GM12878 (cell line): ENCODE measurements at regions of chr6 and their contacts with region 1.

Region 1: GRCh38 chr6:63598049-63599036 is 26.1 kb downstream of the LOC128125822 start:
- DNase-seq: peak; percentile 57
- ATAC-seq: peak; percentile 100
- H3K4me3 ChIP-seq: peak overlapping the region; percentile 74
- H3K27ac ChIP-seq: peak overlapping the region; percentile 56
- H3K4me1 ChIP-seq: peaks cover 6% of the 10 kb centered on the region
- H3K27me3 ChIP-seq: no peaks in the 10 kb centered on the region
- CTCF ChIP-seq: peak; percentile 88 to 94 (median 93); a peak in 5 of 6 replicates
- EP300 ChIP-seq: no peak
- POLR2A ChIP-seq: 0 out of 2 replicates have a peak, but pooled peaks have one; percentile 41
- RAD21 ChIP-seq: peak; percentile 87

Region 2: DNA sequence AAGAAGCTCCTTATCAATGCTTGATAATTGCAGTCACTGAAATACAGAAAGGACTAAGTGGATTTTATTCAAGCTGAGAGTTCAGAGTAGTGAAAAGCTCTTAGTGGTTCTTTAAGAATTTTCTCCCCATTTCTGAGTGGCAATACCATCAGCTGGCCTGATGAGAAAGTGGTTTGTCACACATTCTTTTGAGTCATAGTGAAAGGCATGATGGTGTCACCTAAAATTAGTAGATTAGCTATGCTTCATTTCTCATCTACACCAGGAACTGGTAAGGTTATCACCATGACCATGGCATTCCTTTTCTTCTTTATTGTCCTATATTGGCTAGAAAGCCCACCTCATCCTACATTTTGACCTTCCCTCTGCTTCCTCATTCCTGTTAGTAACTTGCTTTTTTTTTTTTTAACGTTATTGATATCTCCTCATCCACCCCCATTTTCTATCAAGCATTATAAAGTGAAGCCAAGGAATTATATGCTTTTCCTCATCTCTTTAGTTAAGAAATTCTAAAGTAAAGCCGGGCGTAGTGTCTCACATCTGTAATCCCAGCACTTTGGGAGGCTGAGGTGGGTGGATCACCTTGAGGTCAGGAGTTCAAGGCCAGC is 93.5 kb before region 1 on chr6:
- CTCF ChIA-PET with region 1: interaction called, 11 read pairs
- POLR2A ChIA-PET with region 1: interaction called, 3 read pairs
- RAD21 ChIA-PET with region 1: interaction called, 5 read pairs
- SMC1A ChIA-PET with region 1: interaction called, 5 read pairs
- in situ Hi-C with region 1: no loop called
- intact Hi-C with region 1: no loop called
- DNase-seq: peak; percentile 89
- ATAC-seq: peak; percentile 93
- H3K4me3 ChIP-seq: 0 out of 2 replicates have a peak overlapping the region, but pooled peaks have one; percentile 18
- H3K27ac ChIP-seq: peak overlapping the region; percentile 66
- H3K4me1 ChIP-seq: peaks cover 30% of the 10 kb centered on the region
- H3K27me3 ChIP-seq: no peaks in the 10 kb centered on the region
- CTCF ChIP-seq: no peak
- EP300 ChIP-seq: peak; percentile 92 to 98
- POLR2A ChIP-seq: no peak
- RAD21 ChIP-seq: peak; percentile 29; the same call in 1 of the 2 replicates

Region 3: DNA sequence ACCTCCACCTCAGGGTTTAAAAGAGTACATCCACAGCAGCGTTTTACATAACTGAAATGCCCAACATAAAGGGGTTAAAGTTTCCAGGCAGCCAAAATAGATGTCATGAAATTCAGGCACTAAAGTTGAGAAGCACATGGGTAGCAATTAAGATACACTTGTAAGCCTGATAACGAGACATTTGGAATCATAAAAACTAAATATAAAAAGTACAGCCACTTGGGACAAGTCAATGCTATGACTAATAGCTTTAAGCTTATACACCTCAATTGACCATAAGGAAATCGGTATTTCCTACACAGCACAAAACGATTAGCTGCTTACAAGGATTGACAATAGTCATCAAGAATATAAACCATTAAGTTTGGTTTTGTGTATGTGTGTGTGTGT is 14.2 kb before region 1 on chr6:
- CTCF ChIA-PET with region 1: interaction called, 15 read pairs
- POLR2A ChIA-PET with region 1: no interaction called
- RAD21 ChIA-PET with region 1: interaction called, 3 read pairs
- SMC1A ChIA-PET with region 1: interaction called, 14 read pairs
- in situ Hi-C with region 1: no loop called
- intact Hi-C with region 1: no loop called
- DNase-seq: no peak
- ATAC-seq: peak; percentile 14
- H3K4me3 ChIP-seq: no peak overlapping the region
- H3K27ac ChIP-seq: no peak overlapping the region
- H3K4me1 ChIP-seq: no peaks in the 10 kb centered on the region
- H3K27me3 ChIP-seq: no peaks in the 10 kb centered on the region
- CTCF ChIP-seq: no peak
- EP300 ChIP-seq: no peak
- POLR2A ChIP-seq: no peak
- RAD21 ChIP-seq: no peak

Region 4: GRCh38 chr6:63635588-63636517 is 37.5 kb after region 1 on chr6 and contains the start of gene PHF3:
- CTCF ChIA-PET with region 1: interaction called, 6 read pairs
- POLR2A ChIA-PET with region 1: no interaction called
- RAD21 ChIA-PET with region 1: interaction called, 17 read pairs
- SMC1A ChIA-PET with region 1: interaction called, 10 read pairs
- in situ Hi-C with region 1: no loop called
- intact Hi-C with region 1: no loop called
- DNase-seq: peak; percentile 56
- ATAC-seq: peak; percentile 88
- H3K4me3 ChIP-seq: peak within 1 kb of the TSS; percentile 78
- H3K27ac ChIP-seq: peak within 1 kb of the TSS; percentile 93
- H3K4me1 ChIP-seq: no peaks in the 10 kb centered on the region
- H3K27me3 ChIP-seq: no peaks in the 10 kb centered on the region
- CTCF ChIP-seq: peak in 1 of 3 experiments; percentile 9; a peak in 1 of 6 replicates
- EP300 ChIP-seq: no peak
- POLR2A ChIP-seq: peak; percentile 85
- RAD21 ChIP-seq: no peak
- polyA plus RNA-seq, gene PHF3: 8.3 to 9.5 TPM

Region 5: DNA sequence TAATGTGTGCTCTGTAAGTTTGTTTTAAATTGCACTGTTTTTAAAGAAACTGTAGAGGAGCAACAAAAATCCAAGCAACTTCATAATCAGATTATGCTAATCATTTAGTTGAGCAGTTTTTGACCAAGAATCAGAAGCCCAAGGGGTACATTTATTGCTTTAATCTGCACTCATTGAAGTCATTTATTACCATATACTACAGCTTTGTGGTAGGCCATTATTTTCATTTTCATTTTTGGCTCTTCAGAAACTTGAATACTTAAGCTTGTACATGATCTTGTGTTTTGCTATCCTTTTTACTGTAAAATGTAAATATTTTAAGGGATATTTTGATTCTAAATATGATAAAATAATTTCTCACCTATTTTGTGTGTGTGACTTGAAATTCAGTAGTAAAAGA is 115.7 kb after region 1 on chr6:
- CTCF ChIA-PET with region 1: interaction called, 21 read pairs
- POLR2A ChIA-PET with region 1: no interaction called
- RAD21 ChIA-PET with region 1: interaction called, 7 read pairs
- SMC1A ChIA-PET with region 1: interaction called, 4 read pairs
- in situ Hi-C with region 1: no loop called
- intact Hi-C with region 1: no loop called
- DNase-seq: no peak
- ATAC-seq: peak; percentile 53
- H3K4me3 ChIP-seq: no peak overlapping the region
- H3K27ac ChIP-seq: no peak overlapping the region
- H3K4me1 ChIP-seq: no peaks in the 10 kb centered on the region
- H3K27me3 ChIP-seq: no peaks in the 10 kb centered on the region
- CTCF ChIP-seq: no peak
- EP300 ChIP-seq: no peak
- POLR2A ChIP-seq: no peak
- RAD21 ChIP-seq: no peak

Region 6: DNA sequence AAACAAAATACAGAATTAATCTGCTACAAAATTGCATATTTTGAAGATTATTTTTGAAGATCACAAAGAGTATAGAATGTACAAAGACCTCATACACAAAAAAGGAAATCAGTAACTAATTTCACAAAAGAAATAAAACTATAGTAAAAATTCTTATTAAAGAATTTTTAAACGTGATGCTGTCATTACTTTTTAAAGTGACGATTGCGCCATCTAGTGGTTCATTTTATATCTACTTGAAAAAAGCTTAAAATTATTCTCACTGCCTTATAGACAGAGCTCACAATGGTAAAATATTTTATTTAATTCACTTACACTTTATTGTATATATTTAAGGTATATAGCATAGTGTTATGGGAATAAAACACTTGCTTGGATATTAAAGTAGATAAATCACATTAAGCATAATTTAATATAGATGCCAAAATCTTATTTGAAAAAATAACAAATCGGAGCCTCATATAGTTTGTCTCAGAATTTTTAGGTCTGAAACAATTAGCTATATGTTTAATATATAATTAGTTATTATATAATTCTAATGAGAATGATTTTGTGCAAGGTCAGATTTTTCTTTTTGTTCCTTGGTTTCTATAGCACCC is 166.1 kb after region 1 on chr6:
- CTCF ChIA-PET with region 1: interaction called, 151 read pairs
- POLR2A ChIA-PET with region 1: interaction called, 4 read pairs
- RAD21 ChIA-PET with region 1: interaction called, 52 read pairs
- SMC1A ChIA-PET with region 1: interaction called, 53 read pairs
- in situ Hi-C with region 1: loop called (anchors 5 kb)
- intact Hi-C with region 1: loop called (anchors 1 kb)
- DNase-seq: peak; percentile 5
- ATAC-seq: peak; percentile 64
- H3K4me3 ChIP-seq: no peak overlapping the region
- H3K27ac ChIP-seq: no peak overlapping the region
- H3K4me1 ChIP-seq: no peaks in the 10 kb centered on the region
- H3K27me3 ChIP-seq: no peaks in the 10 kb centered on the region
- CTCF ChIP-seq: no peak; a peak in 2 of 6 replicates
- EP300 ChIP-seq: no peak
- POLR2A ChIP-seq: no peak
- RAD21 ChIP-seq: peak; percentile 63

Region 7: GRCh38 chr6:63802606-63803206 is 204.4 kb after region 1 on chr6:
- CTCF ChIA-PET with region 1: interaction called, 42 read pairs
- POLR2A ChIA-PET with region 1: no interaction called
- RAD21 ChIA-PET with region 1: interaction called, 45 read pairs
- SMC1A ChIA-PET with region 1: interaction called, 44 read pairs
- in situ Hi-C with region 1: no loop called
- intact Hi-C with region 1: loop called (anchors 2 kb)
- DNase-seq: no peak
- ATAC-seq: peak; percentile 43; the same call in 1 of the 3 replicates
- H3K4me3 ChIP-seq: no peak overlapping the region
- H3K27ac ChIP-seq: no peak overlapping the region
- H3K4me1 ChIP-seq: no peaks in the 10 kb centered on the region
- H3K27me3 ChIP-seq: no peaks in the 10 kb centered on the region
- CTCF ChIP-seq: peak; percentile 54 to 64 (median 60); a peak in 5 of 6 replicates
- EP300 ChIP-seq: no peak
- POLR2A ChIP-seq: no peak
- RAD21 ChIP-seq: peak; percentile 89